ENCODE measurements at regions of chr12 and their contacts with region 1.

Region 1: GRCh38 chr12:32755654-32756475 is at the start of gene YARS2:
- DNase-seq: peak; percentile 95
- ATAC-seq: peak; percentile 93
- H3K4me3 Mint-ChIP-seq: peak within 1 kb of the TSS; percentile 91
- H3K27ac Mint-ChIP-seq: peak within 1 kb of the TSS; percentile 83
- H3K4me1 Mint-ChIP-seq: peaks cover 19% of the 10 kb centered on the region
- H3K27me3 Mint-ChIP-seq: no peaks in the 10 kb centered on the region
- total RNA-seq, gene YARS2: 21.1 to 28.7 TPM

Region 2: GRCh38 chr12:31651893-31652521 is 1103.9 kb before region 1 on chr12:
- CTCF ChIA-PET with region 1: interaction called, 31 read pairs
- DNase-seq: no peak
- ATAC-seq: no peak
- H3K4me3 Mint-ChIP-seq: peak overlapping the region; percentile 54
- H3K27ac Mint-ChIP-seq: peak overlapping the region; percentile 91
- H3K4me1 Mint-ChIP-seq: peaks cover 20% of the 10 kb centered on the region
- H3K27me3 Mint-ChIP-seq: no peaks in the 10 kb centered on the region

Region 3: DNA sequence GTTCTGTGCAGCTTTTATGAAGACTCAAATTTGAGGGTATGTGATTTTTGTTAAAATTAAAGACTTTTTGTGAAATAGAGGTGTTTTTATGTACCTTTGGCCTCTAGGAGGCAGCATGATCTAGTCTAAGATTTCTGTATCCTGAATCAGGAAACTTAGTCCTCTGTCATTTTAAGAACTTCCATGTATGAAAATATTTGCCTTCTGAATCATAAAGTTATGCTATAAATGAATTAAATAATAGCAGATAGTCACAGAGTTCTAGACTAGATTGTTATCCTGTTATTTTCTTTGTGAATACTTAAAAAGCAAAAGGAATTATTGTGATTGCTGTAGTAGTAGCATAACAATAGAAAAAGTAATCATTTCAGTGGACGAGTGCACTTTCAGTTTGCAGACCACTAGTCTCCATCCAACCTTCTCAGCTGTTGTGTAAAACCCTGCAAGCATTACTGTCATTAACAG is 300.2 kb before region 1 on chr12:
- CTCF ChIA-PET with region 1: interaction called, 41 read pairs
- DNase-seq: no peak
- ATAC-seq: no peak
- H3K4me3 Mint-ChIP-seq: no peak overlapping the region
- H3K27ac Mint-ChIP-seq: no peak overlapping the region
- H3K4me1 Mint-ChIP-seq: no peaks in the 10 kb centered on the region
- H3K27me3 Mint-ChIP-seq: peaks cover 4% of the 10 kb centered on the region

Region 4: GRCh38 chr12:32706335-32707024 is 49.4 kb before region 1 on chr12:
- CTCF ChIA-PET with region 1: interaction called, 10 read pairs
- DNase-seq: no peak
- ATAC-seq: peak; percentile 73
- H3K4me3 Mint-ChIP-seq: no peak overlapping the region
- H3K27ac Mint-ChIP-seq: peak overlapping the region; percentile 44
- H3K4me1 Mint-ChIP-seq: peaks cover 16% of the 10 kb centered on the region
- H3K27me3 Mint-ChIP-seq: no peaks in the 10 kb centered on the region

Region 5: GRCh38 chr12:32788405-32788804 is 32.5 kb after region 1 on chr12:
- CTCF ChIA-PET with region 1: no interaction called
- DNase-seq: no peak
- ATAC-seq: no peak
- H3K4me3 Mint-ChIP-seq: no peak overlapping the region
- H3K27ac Mint-ChIP-seq: no peak overlapping the region
- H3K4me1 Mint-ChIP-seq: no peaks in the 10 kb centered on the region
- H3K27me3 Mint-ChIP-seq: no peaks in the 10 kb centered on the region

Region 6: DNA sequence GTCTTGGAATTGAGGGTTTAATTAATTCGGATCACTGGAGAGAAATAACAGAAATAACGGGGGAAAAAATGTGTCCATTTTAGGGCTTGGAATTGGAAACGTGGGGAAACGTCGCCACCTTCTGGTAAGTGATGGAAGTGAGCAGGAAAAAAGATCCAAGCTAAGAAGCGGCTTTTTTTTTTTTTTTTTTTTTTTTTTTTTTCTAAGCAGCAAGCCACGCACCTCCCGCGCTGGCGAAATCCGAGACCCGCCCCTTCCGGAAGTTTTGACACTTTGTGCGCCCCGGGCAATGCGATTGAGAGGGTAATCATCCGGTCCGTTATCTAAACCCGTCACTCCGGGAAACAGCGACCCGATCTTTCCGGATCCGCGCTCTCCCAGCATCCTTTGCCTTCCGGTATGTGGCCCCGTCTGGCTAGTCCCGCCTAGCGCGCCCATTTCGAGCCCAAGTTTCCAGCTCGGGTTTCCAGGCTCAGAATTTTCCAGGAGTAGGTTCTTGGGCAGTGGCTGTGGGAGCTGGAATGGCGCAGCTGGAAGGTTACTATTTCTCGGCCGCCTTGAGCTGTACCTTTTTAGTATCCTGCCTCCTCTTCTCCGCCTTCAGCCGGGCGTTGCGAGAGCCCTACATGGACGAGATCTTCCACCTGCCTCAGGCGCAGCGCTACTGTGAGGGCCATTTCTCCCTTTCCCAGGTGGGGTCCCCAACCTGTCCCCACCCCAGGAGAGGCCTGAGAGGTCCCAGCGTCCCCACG is 1266.4 kb after region 1 on chr12 and contains the start of gene ALG10:
- CTCF ChIA-PET with region 1: interaction called, 62 read pairs
- DNase-seq: peak; percentile 97
- ATAC-seq: peak; percentile 99
- H3K4me3 Mint-ChIP-seq: peak within 1 kb of the TSS; percentile 97
- H3K27ac Mint-ChIP-seq: peak within 1 kb of the TSS; percentile 98
- H3K4me1 Mint-ChIP-seq: peaks cover 23% of the 10 kb centered on the region
- H3K27me3 Mint-ChIP-seq: no peaks in the 10 kb centered on the region
- total RNA-seq, gene ALG10: 21.9 to 22.2 TPM